ENCODE measurements at regions of chr5 and their contacts with region 1.

Region 1: DNA sequence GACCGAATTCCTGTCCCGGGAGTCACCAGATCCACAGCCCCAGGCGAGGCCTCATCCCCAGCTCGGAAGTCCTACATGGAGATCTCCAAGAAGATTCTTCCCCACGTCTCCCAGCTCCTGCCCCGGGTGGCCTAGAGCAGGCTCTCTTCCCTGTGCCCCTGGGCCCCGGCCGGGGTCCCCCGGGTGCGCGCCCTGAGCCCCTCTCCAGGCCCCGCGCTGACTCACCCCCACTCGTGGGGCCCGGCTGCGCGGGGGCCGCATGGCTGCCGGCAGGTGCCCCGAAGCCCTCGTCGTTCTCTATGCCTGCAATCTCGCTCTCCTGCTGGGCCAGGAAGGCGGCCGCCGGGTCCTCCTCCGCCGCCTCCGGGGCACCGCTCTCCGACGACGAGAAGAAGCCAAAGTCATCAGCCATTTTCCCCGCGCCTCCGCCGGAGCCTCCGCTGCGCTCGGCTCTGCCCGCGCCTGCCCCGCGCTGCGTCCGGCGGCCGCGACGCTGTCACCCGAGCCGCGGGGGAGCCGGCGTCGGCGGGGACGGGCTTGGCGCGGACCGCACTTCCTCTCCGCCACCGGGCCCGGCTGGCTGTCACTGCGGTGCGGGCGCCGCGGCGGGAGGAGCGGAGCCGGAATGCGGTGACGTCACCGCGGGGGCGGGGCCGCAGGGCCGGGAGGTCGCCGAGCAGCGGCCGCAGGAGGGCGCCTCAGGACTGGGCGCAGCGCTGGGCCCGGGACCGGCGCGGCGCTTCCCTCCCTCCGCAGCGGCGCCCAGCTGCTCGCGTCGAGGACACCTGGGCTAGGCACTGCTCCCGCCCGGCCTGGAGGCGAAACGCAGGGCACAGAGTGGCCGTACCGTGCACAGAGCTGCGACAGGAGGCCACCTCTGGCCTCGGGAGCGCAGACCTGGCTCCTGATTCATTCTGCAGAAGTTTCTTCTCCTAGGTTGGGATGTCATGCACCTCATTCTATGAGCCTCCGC is at the start of gene CLTB:
- DNase-seq: peak; percentile 80
- ATAC-seq: peak; percentile 97
- H3K4me3 Mint-ChIP-seq: peak within 1 kb of the TSS; percentile 80
- H3K27ac Mint-ChIP-seq: peak within 1 kb of the TSS; percentile 56
- H3K4me1 Mint-ChIP-seq: peaks cover 26% of the 10 kb centered on the region
- H3K27me3 Mint-ChIP-seq: peaks cover 8% of the 10 kb centered on the region
- CTCF ChIP-seq: no peak
- total RNA-seq, gene CLTB: 29.5 and 48.9 TPM in 2 replicates

Region 2: DNA sequence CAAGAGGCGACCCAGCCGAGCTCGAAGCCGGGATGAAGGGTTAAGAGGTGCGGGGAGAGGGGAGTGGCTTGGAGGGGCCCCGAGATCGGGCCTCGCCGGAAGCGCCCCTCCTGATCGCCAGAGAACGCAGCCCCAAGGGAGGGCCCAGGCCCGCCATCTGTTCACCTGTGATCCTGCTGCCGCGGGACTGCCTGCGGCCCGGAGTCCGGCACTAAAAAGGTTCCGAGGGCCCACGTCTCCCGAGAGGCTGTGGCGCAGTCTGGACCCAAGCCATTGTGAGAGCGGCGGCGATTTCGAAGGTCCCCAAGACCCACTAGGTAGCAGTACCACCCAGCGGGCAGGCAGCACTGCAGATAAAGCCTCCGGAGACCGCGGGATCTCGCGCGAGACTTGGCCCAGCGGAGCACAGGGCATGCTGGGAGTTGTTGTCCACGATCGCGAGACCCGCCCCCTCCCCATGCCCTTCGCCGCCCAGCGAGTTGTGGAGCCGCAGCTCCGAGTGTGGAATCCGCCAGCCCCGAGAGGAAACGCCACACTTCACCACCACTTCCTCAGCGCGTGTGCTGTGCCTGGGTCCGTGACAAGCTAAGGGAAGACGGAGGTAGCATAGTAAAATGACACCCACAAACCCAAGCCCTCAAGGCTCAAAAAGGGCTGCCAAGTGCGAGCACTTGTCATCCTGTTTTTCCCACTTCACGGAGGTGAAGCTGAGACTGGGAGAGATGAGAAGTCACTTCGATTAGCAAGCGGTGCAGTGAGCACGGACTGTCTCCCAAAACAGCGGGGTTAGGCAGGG is 54.6 kb before region 1 on chr5 and contains the start of gene KIAA1191:
- CTCF ChIA-PET with region 1: no interaction called
- POLR2A ChIA-PET with region 1: interaction called, 3 read pairs
- intact Hi-C with region 1: loop called (anchors 1 kb)
- DNase-seq: peak; percentile 86
- ATAC-seq: peak; percentile 87
- H3K4me3 Mint-ChIP-seq: peak within 1 kb of the TSS; percentile 99
- H3K27ac Mint-ChIP-seq: peak within 1 kb of the TSS; percentile 98
- H3K4me1 Mint-ChIP-seq: peaks cover 28% of the 10 kb centered on the region
- H3K27me3 Mint-ChIP-seq: no peaks in the 10 kb centered on the region
- CTCF ChIP-seq: no peak
- total RNA-seq, gene KIAA1191: 56.6 and 57.5 TPM in 2 replicates

Region 3: DNA sequence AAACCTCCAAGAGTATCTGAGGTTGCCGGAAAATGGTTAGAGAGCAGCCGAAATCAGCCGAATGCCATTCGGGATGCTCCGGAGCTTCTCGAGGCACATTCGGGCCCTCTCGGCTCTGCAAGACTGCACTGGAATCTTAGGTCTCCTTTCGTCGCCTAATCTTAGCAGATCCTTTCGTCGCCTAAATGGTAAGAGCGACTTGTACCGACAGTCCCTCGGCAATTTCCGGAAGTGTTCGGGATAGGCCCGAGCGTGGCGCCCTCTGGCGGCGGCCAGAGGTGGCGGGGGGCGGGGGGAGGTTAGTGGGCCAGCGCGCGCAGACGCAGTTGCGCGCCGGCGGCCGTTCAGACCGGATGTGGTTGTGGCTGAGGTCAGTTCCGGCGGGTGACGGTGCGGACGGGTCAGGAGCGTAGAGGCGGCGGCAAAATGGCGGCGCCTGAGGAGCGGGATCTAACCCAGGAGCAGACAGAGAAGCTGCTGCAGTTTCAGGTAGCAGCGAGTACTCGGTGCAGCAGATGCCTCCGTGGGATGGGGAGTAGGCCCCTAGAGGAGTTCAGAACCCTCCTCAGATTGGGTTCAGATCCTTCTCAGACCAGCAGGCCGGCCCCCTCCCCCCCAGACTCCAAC is 31.9 kb after region 1 on chr5 and contains the start of gene FAF2:
- CTCF ChIA-PET with region 1: interaction called, 4 read pairs
- POLR2A ChIA-PET with region 1: interaction called, 8 read pairs
- intact Hi-C with region 1: loop called (anchors 1 kb)
- DNase-seq: peak; percentile 100
- ATAC-seq: peak; percentile 94
- H3K4me3 Mint-ChIP-seq: peak within 1 kb of the TSS; percentile 98
- H3K27ac Mint-ChIP-seq: peak within 1 kb of the TSS; percentile 96
- H3K4me1 Mint-ChIP-seq: peaks cover 32% of the 10 kb centered on the region
- H3K27me3 Mint-ChIP-seq: peaks cover 2% of the 10 kb centered on the region
- CTCF ChIP-seq: peak; percentile 49
- total RNA-seq, gene FAF2: 35.6 and 39.0 TPM in 2 replicates

Region 4: DNA sequence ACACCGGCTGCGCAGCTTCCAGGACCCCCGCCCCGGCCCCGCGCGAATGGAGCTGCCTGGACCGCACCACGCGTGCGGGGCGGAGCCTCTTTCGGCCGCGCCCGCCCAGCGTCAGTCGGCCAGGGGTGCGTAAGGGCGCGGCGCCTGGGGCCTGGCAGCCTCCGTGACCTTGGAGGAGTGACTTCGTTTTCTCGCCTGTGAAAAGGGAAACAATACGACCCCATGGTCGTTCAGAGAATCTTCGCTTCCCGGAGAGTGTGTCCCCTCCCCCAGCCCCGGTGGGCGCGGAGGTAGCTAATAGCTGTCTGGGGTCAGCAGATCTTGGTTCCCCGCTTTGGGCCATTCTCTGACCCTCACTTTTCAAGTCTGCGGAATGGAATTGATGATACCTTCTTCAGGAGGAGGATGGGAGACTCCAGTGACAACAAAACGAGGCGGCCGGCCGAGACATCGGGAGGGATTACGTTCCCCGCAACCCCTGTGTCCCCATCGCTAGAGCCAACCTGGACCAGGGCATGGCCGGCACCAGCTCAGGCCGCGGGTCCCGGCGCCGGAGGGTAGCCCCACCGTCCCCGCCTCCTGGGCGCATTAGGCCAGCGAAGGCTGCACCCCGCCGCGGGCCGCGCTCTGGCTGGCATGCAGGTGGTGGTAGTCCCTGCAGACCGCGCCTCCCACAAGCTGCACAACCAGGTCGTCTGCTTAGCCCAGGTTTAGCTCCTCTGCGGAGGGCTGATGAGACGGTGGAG is 127.4 kb after region 1 on chr5:
- CTCF ChIA-PET with region 1: interaction called, 18 read pairs
- POLR2A ChIA-PET with region 1: interaction called, 22 read pairs
- intact Hi-C with region 1: loop called (anchors 1 kb)
- DNase-seq: peak; percentile 76
- ATAC-seq: peak; percentile 80
- H3K4me3 Mint-ChIP-seq: peak overlapping the region; percentile 93
- H3K27ac Mint-ChIP-seq: peak overlapping the region; percentile 94
- H3K4me1 Mint-ChIP-seq: peaks cover 44% of the 10 kb centered on the region
- H3K27me3 Mint-ChIP-seq: no peaks in the 10 kb centered on the region
- CTCF ChIP-seq: no peak

Region 5: DNA sequence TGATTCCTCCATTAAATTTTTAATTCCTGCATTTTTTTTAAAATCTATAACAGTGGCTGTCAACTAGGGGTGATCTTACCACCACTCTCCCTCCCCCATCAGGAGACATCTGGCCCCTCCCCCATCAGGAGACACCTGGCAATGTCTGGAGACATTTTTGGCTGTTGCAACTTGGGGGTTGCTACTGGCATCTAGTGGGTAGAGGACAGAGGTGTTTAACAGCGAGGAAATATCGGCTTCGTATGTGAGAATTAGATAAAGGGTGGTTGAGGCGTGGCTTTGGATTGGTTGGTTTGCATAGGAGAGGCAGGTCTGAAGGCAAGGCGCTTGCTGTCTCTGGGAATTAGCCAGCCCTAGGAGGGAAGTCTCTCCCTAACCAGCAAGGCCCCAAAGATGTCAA is 143.4 kb after region 1 on chr5:
- CTCF ChIA-PET with region 1: no interaction called
- POLR2A ChIA-PET with region 1: no interaction called
- intact Hi-C with region 1: loop called (anchors 1 kb)
- DNase-seq: no peak
- ATAC-seq: no peak
- H3K4me3 Mint-ChIP-seq: no peak overlapping the region
- H3K27ac Mint-ChIP-seq: no peak overlapping the region
- H3K4me1 Mint-ChIP-seq: peaks cover 4% of the 10 kb centered on the region
- H3K27me3 Mint-ChIP-seq: peaks cover 5% of the 10 kb centered on the region
- CTCF ChIP-seq: no peak

Region 6: DNA sequence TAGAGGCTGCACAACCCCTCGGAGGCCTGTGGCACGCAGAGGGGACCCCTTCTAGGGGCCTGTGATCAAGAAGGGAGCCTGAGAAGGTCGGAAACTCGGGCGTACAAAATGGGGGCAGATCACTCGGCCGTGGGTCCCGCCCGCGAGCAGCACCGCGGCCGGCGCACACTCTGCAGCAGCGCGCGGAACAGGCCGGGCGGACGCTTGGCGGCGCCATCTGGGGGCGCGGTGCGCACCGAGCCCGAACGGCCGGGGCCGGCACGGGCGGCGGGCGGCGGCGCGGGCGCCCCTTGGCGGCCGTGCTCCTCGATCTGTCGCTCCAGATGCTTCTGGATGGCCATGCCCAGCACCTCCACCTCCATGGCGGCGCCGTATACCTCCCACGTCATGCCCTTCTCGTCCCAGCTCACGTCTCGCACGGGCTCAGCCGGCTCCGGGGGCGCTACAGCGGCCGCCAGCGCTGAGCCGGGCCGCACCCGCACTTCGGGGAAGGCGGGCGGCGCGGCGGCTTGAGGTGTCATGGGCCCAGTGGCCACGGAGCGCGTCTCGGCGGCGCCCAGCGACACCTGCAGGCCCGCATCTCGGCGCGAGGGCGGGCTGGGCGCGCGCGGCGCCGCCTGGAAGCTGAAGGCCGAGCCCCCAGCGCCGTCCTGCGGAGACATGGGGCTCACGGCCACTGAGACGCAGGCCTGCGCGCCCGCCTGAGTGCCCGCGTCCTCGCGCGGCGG is 180.6 kb after region 1 on chr5:
- CTCF ChIA-PET with region 1: no interaction called
- POLR2A ChIA-PET with region 1: no interaction called
- intact Hi-C with region 1: loop called (anchors 2 kb)
- DNase-seq: peak; percentile 44
- ATAC-seq: peak; percentile 80
- H3K4me3 Mint-ChIP-seq: peak overlapping the region; percentile 72
- H3K27ac Mint-ChIP-seq: no peak overlapping the region
- H3K4me1 Mint-ChIP-seq: peaks cover 7% of the 10 kb centered on the region
- H3K27me3 Mint-ChIP-seq: peaks cover 10% of the 10 kb centered on the region
- CTCF ChIP-seq: no peak

Measured in activated B cell treated with CpG ODN at 0.5 μM for 24 hours (primary cell).